HAP-1 (cell line): ENCODE measurements at regions of chrX and their contacts with region 1.

Region 1: GRCh38 chrX:103823591-103823990 is 8.5 kb downstream of the RAB9B start:
- DNase-seq: no peak
- H3K4me3 ChIP-seq: no peak overlapping the region
- H3K4me1 ChIP-seq: no peaks in the 10 kb centered on the region
- H3K27me3 ChIP-seq: peaks cover 12% of the 10 kb centered on the region

Region 2: GRCh38 chrX:103686199-103687072 is 137.2 kb before region 1 on chrX and contains the start of gene MORF4L2:
- in situ Hi-C with region 1: loop called (anchors 5 kb)
- DNase-seq: peak; percentile 95 to 99
- H3K4me3 ChIP-seq: peak within 1 kb of the TSS; percentile 84
- H3K4me1 ChIP-seq: peaks cover 8% of the 10 kb centered on the region
- H3K27me3 ChIP-seq: no peaks in the 10 kb centered on the region